ENCODE measurements at regions of chr17 and their contacts with region 1.

Region 1: DNA sequence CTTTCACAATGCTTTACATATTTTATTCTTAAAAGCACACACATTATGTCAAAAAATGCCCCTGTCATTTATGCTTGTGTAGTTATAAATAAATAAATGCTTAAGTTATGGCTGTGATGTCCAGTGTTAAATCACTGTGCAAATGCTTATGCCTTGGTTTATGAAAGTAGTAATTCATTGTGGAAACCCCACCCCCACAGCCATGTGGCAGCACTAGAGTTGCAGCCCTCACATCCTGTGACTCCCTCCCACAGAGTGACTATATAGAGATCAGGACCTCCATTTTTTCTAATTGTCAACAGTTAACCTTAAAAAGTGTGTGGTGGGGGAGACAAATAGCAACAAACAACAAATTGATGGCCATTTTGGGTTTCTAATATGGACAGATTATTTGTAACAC is 2.4 kb downstream of the SKAP1 start:
- DNase-seq: peak in 34 of 35 experiments; percentile 16 to 77 (median 58)
- ATAC-seq: peak; percentile 52 to 74 (median 62)
- H3K4me3 ChIP-seq: peak overlapping the region; percentile 69 to 96
- H3K4me3 Mint-ChIP-seq: peak overlapping the region; percentile 97 to 99 (median 98)
- H3K27ac ChIP-seq: peak overlapping the region; percentile 96
- H3K27ac Mint-ChIP-seq: peak overlapping the region; percentile 96 to 99
- H3K4me1 ChIP-seq: peaks cover 29 to 54% of the 10 kb centered on the region in 2 experiments
- H3K4me1 Mint-ChIP-seq: peaks cover 84 to 93% (median 86%) of the 10 kb centered on the region in 3 donors
- H3K27me3 ChIP-seq: no peaks in the 10 kb centered on the region
- H3K27me3 Mint-ChIP-seq: no peaks in the 10 kb centered on the region

Region 2: DNA sequence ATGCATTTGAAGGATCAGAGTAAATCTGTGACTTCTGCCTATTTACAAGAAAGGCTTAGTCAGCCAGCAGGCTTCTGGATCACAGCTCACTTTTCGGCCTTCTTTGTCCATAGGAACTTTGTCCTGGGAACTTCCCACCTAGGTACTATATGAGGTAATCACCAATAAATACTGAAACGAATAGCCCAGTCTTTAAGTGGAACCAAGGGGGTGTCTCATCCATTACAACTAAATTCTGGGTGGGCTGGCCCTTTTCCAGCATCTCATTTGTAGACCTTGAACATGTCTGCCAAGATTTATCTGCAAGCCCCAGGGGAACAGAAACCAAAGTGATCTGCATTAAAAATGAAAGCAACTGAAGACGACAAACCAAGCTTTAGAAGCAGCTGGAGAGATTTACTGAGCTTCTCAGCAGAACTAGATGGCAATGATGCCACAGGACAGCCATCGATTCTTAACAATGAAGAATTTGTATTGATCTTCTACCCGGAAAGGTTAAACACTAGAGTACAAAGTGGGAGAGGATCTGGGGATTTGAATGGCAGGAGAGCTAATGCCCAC is 264.6 kb before region 1 on chr17:
- CTCF ChIA-PET with region 1: no interaction called
- POLR2A ChIA-PET with region 1: no interaction called
- DNase-seq: no peak
- ATAC-seq: no peak
- H3K4me3 ChIP-seq: no peak overlapping the region
- H3K4me3 Mint-ChIP-seq: no peak overlapping the region
- H3K27ac ChIP-seq: no peak overlapping the region
- H3K27ac Mint-ChIP-seq: peak overlapping the region in 1 of 2 donors; percentile 70
- H3K4me1 ChIP-seq: no peaks in the 10 kb centered on the region
- H3K4me1 Mint-ChIP-seq: peaks cover 7 to 17% (median 9%) of the 10 kb centered on the region in 3 donors
- H3K27me3 ChIP-seq: no peaks in the 10 kb centered on the region
- H3K27me3 Mint-ChIP-seq: no peaks in the 10 kb centered on the region

Region 3: GRCh38 chr17:48392857-48393256 is 34.7 kb before region 1 on chr17:
- CTCF ChIA-PET with region 1: no interaction called
- POLR2A ChIA-PET with region 1: no interaction called
- DNase-seq: no peak
- ATAC-seq: no peak
- H3K4me3 ChIP-seq: no peak overlapping the region
- H3K4me3 Mint-ChIP-seq: no peak overlapping the region
- H3K27ac ChIP-seq: no peak overlapping the region
- H3K27ac Mint-ChIP-seq: no peak overlapping the region
- H3K4me1 ChIP-seq: peaks cover 0 to 2% of the 10 kb centered on the region in 2 experiments
- H3K4me1 Mint-ChIP-seq: peaks cover 53 to 64% (median 56%) of the 10 kb centered on the region in 3 donors
- H3K27me3 ChIP-seq: no peaks in the 10 kb centered on the region
- H3K27me3 Mint-ChIP-seq: no peaks in the 10 kb centered on the region

Region 4: GRCh38 chr17:48406936-48407567 is 20.5 kb before region 1 on chr17:
- CTCF ChIA-PET with region 1: interaction called, 4 to 12 read pairs
- POLR2A ChIA-PET with region 1: interaction called in 1 of 2 experiments, 4 read pairs
- DNase-seq: peak in 1 of 35 experiments; percentile 43
- ATAC-seq: peak in 1 of 4 experiments; percentile 38
- H3K4me3 ChIP-seq: no peak overlapping the region
- H3K4me3 Mint-ChIP-seq: peak overlapping the region in 2 of 3 donors; percentile 6 to 30
- H3K27ac ChIP-seq: no peak overlapping the region
- H3K27ac Mint-ChIP-seq: peak overlapping the region; percentile 3 to 56
- H3K4me1 ChIP-seq: peaks cover 14 to 20% of the 10 kb centered on the region in 2 experiments
- H3K4me1 Mint-ChIP-seq: peaks cover 66 to 70% (median 68%) of the 10 kb centered on the region in 3 donors
- H3K27me3 ChIP-seq: no peaks in the 10 kb centered on the region
- H3K27me3 Mint-ChIP-seq: no peaks in the 10 kb centered on the region

Measured in T-cell (primary cell).